Sigmoid colon (tissue), 7 donors: ENCODE measurements at regions of chr10 and their contacts with region 1.

Region 1: DNA sequence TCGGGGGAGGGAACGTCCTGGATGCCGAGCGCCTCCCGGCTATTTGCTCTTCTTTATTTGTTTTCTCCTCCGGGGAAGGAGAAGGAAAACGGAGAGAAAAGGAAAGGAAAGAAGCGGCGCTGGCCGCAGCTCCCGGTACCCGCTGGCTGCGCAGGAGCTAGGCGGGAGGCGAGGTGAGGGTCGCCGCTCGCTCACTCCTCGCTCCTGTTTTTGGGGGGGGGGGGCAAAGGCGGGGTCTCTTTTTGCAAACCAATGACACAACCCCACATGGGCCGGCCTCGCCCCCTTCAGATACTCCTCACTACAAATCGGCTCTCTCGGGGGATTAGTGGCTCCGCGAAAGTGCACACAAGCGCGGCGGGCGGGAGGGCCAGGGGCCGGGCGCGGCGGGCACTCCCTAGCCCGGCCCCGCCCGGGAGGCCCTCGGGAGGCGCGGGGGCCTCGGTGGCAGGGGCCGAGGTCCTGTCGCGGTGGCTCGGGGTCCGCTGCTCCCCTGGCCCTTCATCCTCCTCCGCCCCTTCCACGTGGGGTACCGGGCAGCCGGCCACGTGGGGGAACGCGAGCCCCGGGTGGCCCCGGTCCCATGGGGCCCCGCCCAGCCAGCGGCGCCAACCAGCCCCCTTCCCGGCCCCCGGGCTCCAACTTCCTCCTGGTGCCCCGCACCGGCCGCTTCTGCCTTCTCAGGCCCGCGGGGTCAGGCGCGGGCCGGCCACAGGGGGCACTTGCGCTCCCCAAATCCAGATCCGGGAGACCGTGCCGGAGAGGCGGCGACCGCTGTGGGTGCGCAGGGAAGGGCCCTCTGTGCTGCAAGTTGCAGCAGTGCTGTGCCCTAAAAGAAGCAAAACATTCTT is 718 bp upstream of the CTBP2 start:
- DNase-seq: peak; percentile 93
- H3K4me3 ChIP-seq: peak overlapping the region; percentile 85 to 97 (median 92)
- H3K27ac ChIP-seq: peak overlapping the region; percentile 97 to 99 (median 98)
- H3K4me1 ChIP-seq: peaks cover 0 to 38% (median 27%) of the 10 kb centered on the region in 4 donors
- H3K27me3 ChIP-seq: no peaks in the 10 kb centered on the region
- CTCF ChIP-seq: peak in 3 of 4 experiments; percentile 16 to 57 (median 39)
- EP300 ChIP-seq: no peak
- POLR2A ChIP-seq: no peak

Region 2: GRCh38 chr10:124703778-124704427 is 457.2 kb before region 1 on chr10:
- intact Hi-C with region 1: no loop called
- DNase-seq: peak; percentile 90
- H3K4me3 ChIP-seq: no peak overlapping the region
- H3K27ac ChIP-seq: peak overlapping the region; percentile 66 to 81 (median 72)
- H3K4me1 ChIP-seq: peaks cover 0 to 99% (median 92%) of the 10 kb centered on the region in 4 donors
- H3K27me3 ChIP-seq: no peaks in the 10 kb centered on the region
- CTCF ChIP-seq: no peak
- EP300 ChIP-seq: no peak
- POLR2A ChIP-seq: no peak

Region 3: GRCh38 chr10:124916585-124917427 is 244.3 kb before region 1 on chr10:
- intact Hi-C with region 1: loop called (anchors 5 kb)
- DNase-seq: peak; percentile 99
- H3K4me3 ChIP-seq: peak overlapping the region; percentile 72 to 94 (median 87)
- H3K27ac ChIP-seq: peak overlapping the region; percentile 93 to 100 (median 96)
- H3K4me1 ChIP-seq: peaks cover 0 to 52% (median 45%) of the 10 kb centered on the region in 4 donors
- H3K27me3 ChIP-seq: no peaks in the 10 kb centered on the region
- CTCF ChIP-seq: no peak
- EP300 ChIP-seq: peak in 1 of 4 donors; percentile 42
- POLR2A ChIP-seq: peak; percentile 69 to 78

Region 4: GRCh38 chr10:124992462-124993344 is 168.4 kb before region 1 on chr10:
- intact Hi-C with region 1: loop called (anchors 5 kb)
- DNase-seq: peak; percentile 88
- H3K4me3 ChIP-seq: no peak overlapping the region
- H3K27ac ChIP-seq: peak overlapping the region in 3 of 4 donors; percentile 11 to 53 (median 37)
- H3K4me1 ChIP-seq: peaks cover 0 to 10% (median 2%) of the 10 kb centered on the region in 4 donors
- H3K27me3 ChIP-seq: no peaks in the 10 kb centered on the region
- CTCF ChIP-seq: peak; percentile 46 to 85 (median 74)
- EP300 ChIP-seq: no peak
- POLR2A ChIP-seq: no peak

Region 5: GRCh38 chr10:125118011-125118611 is 43.0 kb before region 1 on chr10:
- intact Hi-C with region 1: no loop called
- DNase-seq: peak; percentile 77
- H3K4me3 ChIP-seq: no peak overlapping the region
- H3K27ac ChIP-seq: peak overlapping the region; percentile 63 to 75 (median 64)
- H3K4me1 ChIP-seq: peaks cover 0 to 81% (median 68%) of the 10 kb centered on the region in 4 donors
- H3K27me3 ChIP-seq: no peaks in the 10 kb centered on the region
- CTCF ChIP-seq: no peak
- EP300 ChIP-seq: no peak
- POLR2A ChIP-seq: no peak

Region 6: GRCh38 chr10:125343118-125343925 is 182.2 kb after region 1 on chr10:
- intact Hi-C with region 1: loop called (anchors 10 kb)
- DNase-seq: no peak
- H3K4me3 ChIP-seq: no peak overlapping the region
- H3K27ac ChIP-seq: no peak overlapping the region
- H3K4me1 ChIP-seq: no peaks in the 10 kb centered on the region
- H3K27me3 ChIP-seq: no peaks in the 10 kb centered on the region
- CTCF ChIP-seq: peak in 3 of 4 experiments; percentile 30 to 54 (median 33)
- EP300 ChIP-seq: no peak
- POLR2A ChIP-seq: no peak

Region 7: DNA sequence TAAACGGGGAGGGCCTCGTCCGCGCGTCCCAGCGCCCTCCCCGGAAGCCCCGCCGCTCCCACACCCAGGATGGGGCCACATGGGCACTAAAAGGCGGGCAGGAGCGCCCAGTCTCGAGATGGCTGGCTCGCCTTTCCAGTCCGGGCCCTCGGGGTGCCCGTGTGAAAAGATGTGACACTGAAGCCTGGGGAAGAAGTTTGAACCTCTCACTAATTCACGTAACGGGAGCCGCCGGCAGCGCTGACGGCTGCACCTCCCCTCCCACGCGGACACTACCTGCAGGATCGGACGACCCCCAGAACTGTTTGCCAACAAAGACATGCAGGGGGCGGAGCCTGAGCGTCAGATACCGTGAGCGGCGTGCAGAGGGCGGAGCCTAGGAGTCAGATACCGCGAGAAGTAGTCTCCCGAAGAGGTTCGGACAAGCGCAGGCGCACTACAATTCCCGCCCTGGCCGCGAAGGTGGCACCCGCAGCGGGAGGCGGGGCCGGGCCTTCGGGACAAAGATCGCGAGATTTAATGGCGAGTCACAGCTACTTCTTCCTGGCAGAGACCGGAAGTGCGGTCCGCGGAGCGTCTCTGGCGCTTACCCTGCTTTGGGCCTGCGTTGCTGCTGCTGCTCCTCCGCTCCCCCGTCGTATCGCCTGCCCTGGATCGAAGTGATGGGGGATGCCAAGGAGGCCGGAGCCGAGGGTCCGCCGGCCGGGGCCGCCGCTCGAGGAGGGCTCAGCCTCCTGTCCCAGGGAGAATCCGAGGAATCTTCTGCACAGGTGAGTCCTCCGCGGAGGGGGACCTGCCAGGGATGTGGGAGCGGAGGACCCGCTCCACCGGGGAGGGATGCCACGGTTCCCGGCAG is 558.3 kb after region 1 on chr10 and contains the start of gene EDRF1:
- intact Hi-C with region 1: loop called (anchors 2 kb)
- DNase-seq: peak; percentile 99
- H3K4me3 ChIP-seq: peak within 1 kb of the TSS; percentile 68 to 97 (median 84)
- H3K27ac ChIP-seq: peak within 1 kb of the TSS; percentile 86 to 94 (median 89)
- H3K4me1 ChIP-seq: peaks cover 0 to 21% (median 17%) of the 10 kb centered on the region in 4 donors
- H3K27me3 ChIP-seq: no peaks in the 10 kb centered on the region
- CTCF ChIP-seq: no peak
- EP300 ChIP-seq: no peak
- POLR2A ChIP-seq: peak; percentile 56 to 81
- total RNA-seq, gene EDRF1: 16.1 to 20.8 (median 18.4) TPM

Region 8: GRCh38 chr10:125822878-125823662 is 662.0 kb after region 1 on chr10 and contains the starts of genes BCCIP and UROS:
- intact Hi-C with region 1: loop called (anchors 10 kb)
- DNase-seq: peak; percentile 95
- H3K4me3 ChIP-seq: peak within 1 kb of the TSS; percentile 91 to 97 (median 93)
- H3K27ac ChIP-seq: peak within 1 kb of the TSS; percentile 80 to 91 (median 88)
- H3K4me1 ChIP-seq: peaks cover 0 to 37% (median 31%) of the 10 kb centered on the region in 4 donors
- H3K27me3 ChIP-seq: no peaks in the 10 kb centered on the region
- CTCF ChIP-seq: no peak
- EP300 ChIP-seq: no peak
- POLR2A ChIP-seq: peak; percentile 15 to 25
- total RNA-seq, gene BCCIP: 37.7 to 54.9 (median 45.8) TPM
- total RNA-seq, gene UROS: 26.3 to 46.7 (median 36.8) TPM

Region 9: DNA sequence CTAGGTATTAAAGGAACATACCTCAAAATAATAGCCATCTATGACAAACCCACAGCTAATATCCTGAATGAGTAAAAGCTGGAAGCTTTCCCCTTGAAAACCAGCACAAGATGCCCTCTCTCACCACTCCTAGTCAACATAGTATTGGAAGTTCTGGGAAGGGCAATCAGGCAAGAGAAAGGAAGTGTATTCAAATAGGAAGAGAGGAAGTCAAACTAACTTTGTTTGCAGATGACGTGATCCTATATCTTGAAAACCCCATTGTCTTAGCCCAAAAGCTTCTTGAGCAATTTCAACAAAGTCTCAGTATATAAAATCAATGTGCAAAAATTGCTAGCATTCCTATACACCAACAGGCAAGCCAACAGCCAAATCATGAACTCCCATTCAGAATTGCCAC is 866.6 kb after region 1 on chr10:
- intact Hi-C with region 1: no loop called
- DNase-seq: no peak
- H3K4me3 ChIP-seq: no peak overlapping the region
- H3K27ac ChIP-seq: no peak overlapping the region
- H3K4me1 ChIP-seq: no peaks in the 10 kb centered on the region
- H3K27me3 ChIP-seq: no peaks in the 10 kb centered on the region
- CTCF ChIP-seq: no peak
- EP300 ChIP-seq: no peak
- POLR2A ChIP-seq: no peak